A673 (cell line): ENCODE measurements at regions of chr2 and their contacts with region 1.

Region 1: GRCh38 chr2:179240481-179241451 is 23.9 kb downstream of the SESTD1 start:
- DNase-seq: no peak
- H3K4me3 ChIP-seq: no peak overlapping the region
- H3K27ac ChIP-seq: no peak overlapping the region
- H3K4me1 ChIP-seq: peaks cover 4% of the 10 kb centered on the region
- H3K27me3 ChIP-seq: no peaks in the 10 kb centered on the region
- CTCF ChIP-seq: 0 out of 2 replicates have a peak, but pooled peaks have one; percentile 20

Region 2: DNA sequence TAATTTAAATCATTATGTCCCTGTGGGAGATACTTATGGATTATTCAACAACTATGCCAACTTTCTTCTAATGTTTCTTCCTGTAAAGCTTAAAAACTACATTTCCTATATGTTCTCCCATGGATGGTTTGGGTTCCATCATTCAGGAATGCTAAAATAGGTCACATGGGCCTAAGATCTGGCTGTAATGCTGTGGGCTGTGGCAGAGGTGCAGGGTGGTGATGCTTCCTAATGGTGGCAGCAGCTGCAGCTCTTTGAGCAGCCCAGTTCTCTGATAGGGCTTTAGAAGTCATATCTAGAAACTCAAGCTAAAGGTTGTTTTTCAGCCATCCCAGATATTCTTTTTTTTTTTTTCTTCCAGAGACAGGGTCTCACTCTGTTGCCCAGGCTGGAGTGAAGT is 354.5 kb after region 1 on chr2:
- CTCF ChIA-PET with region 1: no interaction called
- POLR2A ChIA-PET with region 1: no interaction called
- intact Hi-C with region 1: no loop called
- DNase-seq: peak; percentile 24
- H3K4me3 ChIP-seq: no peak overlapping the region
- H3K27ac ChIP-seq: no peak overlapping the region
- H3K4me1 ChIP-seq: no peaks in the 10 kb centered on the region
- H3K27me3 ChIP-seq: no peaks in the 10 kb centered on the region
- CTCF ChIP-seq: peak; percentile 32; the same call in 1 of the 2 replicates

Region 3: GRCh38 chr2:179686718-179687342 is 446.1 kb after region 1 on chr2:
- CTCF ChIA-PET with region 1: no interaction called
- POLR2A ChIA-PET with region 1: interaction called, 15 read pairs
- intact Hi-C with region 1: no loop called
- DNase-seq: no peak
- H3K4me3 ChIP-seq: no peak overlapping the region
- H3K27ac ChIP-seq: no peak overlapping the region
- H3K4me1 ChIP-seq: no peaks in the 10 kb centered on the region
- H3K27me3 ChIP-seq: no peaks in the 10 kb centered on the region
- CTCF ChIP-seq: no peak